Activated B cell treated with CpG ODN at 0.5 μM for 24 hours (primary cell): ENCODE measurements at regions of chr9 and their contacts with region 1.

Region 1: GRCh38 chr9:133955821-133956411 is 36.2 kb downstream of the VAV2 start:
- DNase-seq: no peak
- ATAC-seq: peak; percentile 68
- H3K4me3 Mint-ChIP-seq: peak overlapping the region; percentile 86
- H3K27ac Mint-ChIP-seq: peak overlapping the region; percentile 96
- H3K4me1 Mint-ChIP-seq: peaks cover 71% of the 10 kb centered on the region
- H3K27me3 Mint-ChIP-seq: no peaks in the 10 kb centered on the region
- CTCF ChIP-seq: no peak

Region 2: GRCh38 chr9:133968966-133969617 is 13.2 kb after region 1 on chr9:
- CTCF ChIA-PET with region 1: interaction called, 6 read pairs
- POLR2A ChIA-PET with region 1: interaction called, 15 read pairs
- intact Hi-C with region 1: loop called (anchors 2 kb)
- DNase-seq: no peak
- ATAC-seq: no peak
- H3K4me3 Mint-ChIP-seq: peak overlapping the region; percentile 60
- H3K27ac Mint-ChIP-seq: no peak overlapping the region
- H3K4me1 Mint-ChIP-seq: peaks cover 90% of the 10 kb centered on the region
- H3K27me3 Mint-ChIP-seq: no peaks in the 10 kb centered on the region
- CTCF ChIP-seq: no peak

Region 3: DNA sequence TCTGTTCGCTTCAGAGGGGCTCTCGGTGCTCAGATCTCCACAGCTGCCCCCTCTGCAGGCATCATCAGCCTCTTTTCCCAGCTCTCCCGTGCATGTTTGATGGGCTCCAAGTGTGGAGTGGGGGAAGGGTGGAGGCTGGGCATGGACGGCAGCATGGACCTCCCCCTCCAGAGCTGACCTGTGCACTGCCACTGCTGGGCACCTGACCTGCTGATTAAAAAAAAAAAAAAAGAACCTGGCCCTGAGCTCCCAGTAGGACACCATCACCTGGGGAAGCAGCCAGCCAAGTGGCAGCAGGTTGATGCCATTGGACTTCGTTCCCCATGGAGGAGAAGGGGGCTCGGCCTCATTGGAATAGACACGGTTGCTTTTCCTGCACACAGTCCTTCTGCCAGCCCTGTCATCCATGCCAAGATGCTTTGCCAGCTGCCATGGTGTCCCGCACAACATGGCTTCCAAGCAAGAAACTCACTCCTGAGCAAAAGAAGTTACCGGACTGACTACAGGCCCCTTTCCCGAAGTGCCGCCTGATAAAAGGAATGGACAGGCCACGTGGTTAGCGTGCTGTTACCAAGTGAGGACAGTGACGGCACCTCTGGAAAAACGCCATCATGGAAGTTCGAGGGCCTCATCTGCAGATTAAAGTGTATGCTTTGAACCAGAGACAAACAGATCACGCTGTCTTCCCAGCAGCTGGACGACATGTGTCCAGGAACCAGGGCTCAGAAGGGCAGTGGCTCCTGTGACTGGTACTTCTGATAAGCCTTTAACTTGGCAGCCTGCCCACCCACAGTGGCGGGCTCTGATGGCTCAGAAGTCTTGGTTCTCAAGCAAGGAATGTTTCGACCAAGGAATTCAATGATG is 54.6 kb after region 1 on chr9:
- CTCF ChIA-PET with region 1: no interaction called
- POLR2A ChIA-PET with region 1: no interaction called
- intact Hi-C with region 1: no loop called
- DNase-seq: no peak
- ATAC-seq: no peak
- H3K4me3 Mint-ChIP-seq: no peak overlapping the region
- H3K27ac Mint-ChIP-seq: no peak overlapping the region
- H3K4me1 Mint-ChIP-seq: no peaks in the 10 kb centered on the region
- H3K27me3 Mint-ChIP-seq: peaks cover 14% of the 10 kb centered on the region
- CTCF ChIP-seq: no peak

Region 4: DNA sequence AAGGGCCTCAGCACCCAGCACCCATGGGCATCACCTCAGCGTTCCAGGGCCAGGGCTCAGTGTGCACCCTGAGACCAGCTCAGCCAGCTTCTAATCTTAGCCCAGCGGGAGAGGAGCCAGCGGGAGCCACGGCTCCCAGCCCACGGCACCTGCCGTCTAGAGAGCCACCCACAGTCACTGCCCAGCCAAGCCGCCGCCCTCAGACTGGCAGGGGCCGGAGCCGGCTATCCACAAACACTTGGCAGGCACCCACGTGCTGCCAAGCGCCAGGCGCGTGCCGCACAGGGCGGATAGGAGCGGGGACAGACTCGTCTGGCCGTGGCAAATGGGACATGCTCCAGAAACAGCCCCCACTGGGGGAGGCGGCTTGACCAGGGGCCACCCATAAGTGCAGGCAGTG is 93.3 kb after region 1 on chr9:
- CTCF ChIA-PET with region 1: no interaction called
- POLR2A ChIA-PET with region 1: no interaction called
- intact Hi-C with region 1: no loop called
- DNase-seq: no peak
- ATAC-seq: no peak
- H3K4me3 Mint-ChIP-seq: no peak overlapping the region
- H3K27ac Mint-ChIP-seq: no peak overlapping the region
- H3K4me1 Mint-ChIP-seq: no peaks in the 10 kb centered on the region
- H3K27me3 Mint-ChIP-seq: no peaks in the 10 kb centered on the region
- CTCF ChIP-seq: no peak